ENCODE measurements at regions of chr17 and their contacts with region 1.

Region 1: DNA sequence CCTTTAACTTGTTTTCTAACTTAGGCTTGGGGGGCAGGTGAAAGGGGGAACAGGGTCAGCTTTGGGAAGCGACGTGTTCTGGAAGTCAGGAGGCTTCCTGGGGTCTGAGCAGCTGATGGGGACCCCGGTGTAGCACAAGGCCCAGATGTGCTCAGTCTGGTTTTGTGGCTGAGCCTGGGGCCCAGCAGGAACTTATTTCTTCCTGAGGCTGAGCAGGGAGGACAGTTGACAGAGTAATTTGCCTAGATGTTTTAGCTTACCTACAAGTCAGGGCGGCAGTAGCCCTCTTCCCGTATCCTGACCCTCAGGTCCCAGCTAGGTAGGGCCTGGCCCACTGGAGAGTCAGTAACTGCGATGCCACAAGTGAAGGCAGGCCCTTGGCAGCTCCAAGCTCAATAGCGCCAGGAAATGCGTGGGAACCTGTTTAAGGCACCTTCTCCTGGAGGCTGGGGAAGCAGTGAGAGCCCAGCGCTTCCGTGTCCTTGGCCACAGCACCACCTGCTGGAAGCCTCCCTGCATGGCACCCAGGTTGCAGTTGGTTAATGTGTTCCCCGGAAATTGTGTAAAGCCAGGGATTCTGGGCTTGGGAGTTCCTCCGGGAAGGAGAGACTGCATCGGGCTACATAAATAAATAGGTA is 5.2 kb downstream of the CCR7 start:
- DNase-seq: peak; percentile 88
- H3K4me3 ChIP-seq: peak overlapping the region; percentile 57
- H3K27ac ChIP-seq: peak overlapping the region; percentile 37
- H3K4me1 ChIP-seq: peaks cover 47% of the 10 kb centered on the region
- CTCF ChIP-seq: peak; percentile 99

Region 2: DNA sequence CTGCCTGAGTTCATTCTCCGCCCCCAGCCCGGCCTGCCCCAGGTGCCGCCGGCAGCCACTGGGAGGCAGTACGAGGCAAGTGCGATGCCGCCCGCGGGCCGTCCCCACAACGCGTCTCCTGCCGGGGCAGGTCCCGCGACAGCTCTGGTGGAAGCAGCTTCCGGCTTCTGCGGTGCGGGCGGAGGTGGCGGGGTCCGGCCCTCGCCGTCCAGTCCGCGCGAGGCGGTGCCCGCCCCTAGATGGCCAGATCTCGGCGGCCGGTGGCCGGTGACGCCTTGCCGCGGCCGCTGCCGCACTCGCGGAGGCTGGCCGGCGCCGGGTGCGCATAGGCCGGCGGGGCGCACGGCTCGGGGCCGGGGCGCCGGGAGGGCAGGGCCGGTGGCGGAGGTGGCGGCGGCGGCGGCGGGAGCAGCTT is 197.4 kb before region 1 on chr17:
- CTCF ChIA-PET with region 1: no interaction called
- POLR2A ChIA-PET with region 1: no interaction called
- intact Hi-C with region 1: loop called (anchors 1 kb)
- DNase-seq: peak; percentile 82
- H3K4me3 ChIP-seq: peak overlapping the region; percentile 53
- H3K27ac ChIP-seq: no peak overlapping the region
- H3K4me1 ChIP-seq: peaks cover 4% of the 10 kb centered on the region
- CTCF ChIP-seq: peak; percentile 83

Region 3: DNA sequence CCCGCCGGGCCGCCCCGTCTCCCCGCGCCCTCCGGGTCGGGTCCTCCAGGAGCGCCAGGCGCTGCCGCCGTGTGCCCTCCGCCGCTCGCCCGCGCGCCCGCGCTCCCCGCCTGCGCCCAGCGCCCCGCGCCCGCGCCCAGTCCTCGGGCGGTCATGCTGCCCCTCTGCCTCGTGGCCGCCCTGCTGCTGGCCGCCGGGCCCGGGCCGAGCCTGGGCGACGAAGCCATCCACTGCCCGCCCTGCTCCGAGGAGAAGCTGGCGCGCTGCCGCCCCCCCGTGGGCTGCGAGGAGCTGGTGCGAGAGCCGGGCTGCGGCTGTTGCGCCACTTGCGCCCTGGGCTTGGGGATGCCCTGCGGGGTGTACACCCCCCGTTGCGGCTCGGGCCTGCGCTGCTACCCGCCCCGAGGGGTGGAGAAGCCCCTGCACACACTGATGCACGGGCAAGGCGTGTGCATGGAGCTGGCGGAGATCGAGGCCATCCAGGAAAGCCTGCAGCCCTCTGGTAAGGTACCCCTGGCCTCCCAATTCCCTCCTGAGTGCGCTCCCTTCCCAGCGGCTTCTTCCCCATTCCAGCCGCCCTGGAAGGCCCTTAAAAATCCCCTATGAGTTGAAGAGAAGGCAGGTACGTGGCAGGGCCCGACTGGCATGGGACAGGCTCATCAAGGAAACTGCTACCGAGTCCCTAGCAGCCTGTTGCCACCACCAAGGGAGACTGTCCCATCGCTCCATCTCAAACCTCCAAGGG is 116.3 kb before region 1 on chr17:
- CTCF ChIA-PET with region 1: no interaction called
- POLR2A ChIA-PET with region 1: no interaction called
- intact Hi-C with region 1: loop called (anchors 1 kb)
- DNase-seq: peak; percentile 20
- H3K4me3 ChIP-seq: no peak overlapping the region
- H3K27ac ChIP-seq: no peak overlapping the region
- H3K4me1 ChIP-seq: no peaks in the 10 kb centered on the region
- CTCF ChIP-seq: peak; percentile 41; the same call in 1 of the 2 replicates

Region 4: DNA sequence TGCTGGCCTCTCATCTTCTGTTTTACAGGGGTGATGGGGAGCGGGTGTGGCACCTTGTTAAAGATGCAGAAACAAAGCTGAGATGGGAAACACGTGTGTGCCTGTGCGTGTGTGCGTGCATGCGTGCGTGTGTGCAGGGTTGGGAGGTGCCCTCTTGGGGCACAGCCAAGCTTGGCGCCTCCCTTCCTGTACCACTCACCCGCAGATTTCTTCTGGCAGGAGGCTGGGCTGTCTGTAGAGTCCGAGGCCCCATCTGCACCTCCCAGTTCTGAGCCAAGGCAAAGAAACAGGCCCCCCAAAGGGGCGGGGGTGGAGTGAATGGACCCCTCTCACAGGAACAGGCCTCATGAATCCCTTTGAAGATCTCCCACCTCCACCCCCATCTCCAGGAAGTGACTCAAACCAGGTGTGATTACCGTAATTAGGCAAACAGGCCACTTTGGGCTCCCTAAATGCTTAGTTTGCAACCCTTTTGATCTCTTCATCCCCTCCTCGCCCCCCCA is 79.5 kb before region 1 on chr17:
- CTCF ChIA-PET with region 1: no interaction called
- POLR2A ChIA-PET with region 1: no interaction called
- intact Hi-C with region 1: loop called (anchors 1 kb)
- DNase-seq: peak; percentile 67
- H3K4me3 ChIP-seq: peak overlapping the region; percentile 19
- H3K27ac ChIP-seq: peak overlapping the region; percentile 4
- H3K4me1 ChIP-seq: peaks cover 18% of the 10 kb centered on the region
- CTCF ChIP-seq: no peak

Region 5: DNA sequence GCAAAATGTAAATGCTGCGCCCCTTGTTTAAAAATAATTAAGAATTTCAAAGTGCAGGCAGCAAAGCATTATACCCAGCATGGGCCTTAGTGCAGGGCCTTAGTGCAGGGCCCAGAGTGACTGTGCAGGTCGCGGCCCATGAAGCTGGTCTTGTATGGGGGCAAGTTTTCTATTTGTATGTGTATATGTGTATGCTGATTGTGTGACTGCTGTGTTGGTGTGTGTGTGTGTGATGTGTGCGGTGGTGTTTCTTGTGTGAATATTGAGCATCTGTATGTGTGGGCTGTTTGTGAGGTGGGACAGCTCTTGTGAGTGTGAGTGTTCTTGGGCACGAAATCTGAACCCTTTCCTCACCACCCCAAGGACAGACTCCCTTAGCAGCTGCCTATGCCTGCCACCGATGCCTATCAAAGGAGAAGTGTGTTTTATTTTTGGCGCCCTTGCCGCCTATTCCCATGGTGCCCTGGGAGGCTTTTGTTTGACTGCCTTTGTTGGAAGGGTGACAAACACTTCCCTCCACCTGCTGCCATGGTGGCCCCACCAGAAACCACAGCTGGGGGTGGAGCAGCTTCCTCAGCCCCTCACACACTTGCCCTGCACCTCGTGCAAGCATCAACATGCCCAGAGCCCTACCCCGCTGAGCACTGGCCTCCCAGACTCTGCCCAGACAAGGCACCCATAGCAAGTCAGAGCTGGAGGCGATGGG is 12.8 kb before region 1 on chr17:
- CTCF ChIA-PET with region 1: interaction called, 10 read pairs
- POLR2A ChIA-PET with region 1: interaction called, 4 read pairs
- intact Hi-C with region 1: no loop called
- DNase-seq: peak; percentile 88
- H3K4me3 ChIP-seq: peak overlapping the region; percentile 8
- H3K27ac ChIP-seq: peak overlapping the region; percentile 62
- H3K4me1 ChIP-seq: peaks cover 39% of the 10 kb centered on the region
- CTCF ChIP-seq: no peak

Region 6: GRCh38 chr17:40577611-40578065 is 17.6 kb after region 1 on chr17:
- CTCF ChIA-PET with region 1: no interaction called
- POLR2A ChIA-PET with region 1: no interaction called
- intact Hi-C with region 1: no loop called
- DNase-seq: no peak
- H3K4me3 ChIP-seq: no peak overlapping the region
- H3K27ac ChIP-seq: no peak overlapping the region
- H3K4me1 ChIP-seq: peaks cover 11% of the 10 kb centered on the region
- CTCF ChIP-seq: no peak

Measured in OCI-LY7 (cell line).